Activated naive CD4-positive, alpha-beta T cell treated with anti-CD3 and anti-CD28 coated beads for 36 hours (primary cell): ENCODE measurements at regions of chr1 and their contacts with region 1.

Region 1: DNA sequence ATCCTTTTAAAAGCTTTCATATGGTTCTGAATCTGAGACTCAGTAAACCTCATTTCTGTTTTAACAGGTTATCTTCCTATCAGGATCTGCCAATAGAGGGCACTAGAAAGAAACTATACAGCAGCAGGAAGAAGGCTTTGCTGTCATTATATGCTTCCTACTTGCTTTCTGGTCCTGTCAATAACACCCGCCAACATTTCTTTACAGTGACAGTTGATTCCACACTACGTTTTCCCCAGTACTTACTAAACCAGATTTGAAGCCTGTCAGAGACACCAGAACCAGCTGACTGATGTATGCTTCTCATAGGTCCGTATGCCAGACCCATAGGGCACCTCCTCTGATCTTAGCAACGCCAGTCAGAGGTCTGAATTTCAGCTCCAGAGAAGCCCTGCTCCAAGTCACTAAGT is 341.0 kb upstream of the NEGR1 start:
- DNase-seq: no peak
- H3K4me3 Mint-ChIP-seq: no peak overlapping the region
- H3K27ac Mint-ChIP-seq: no peak overlapping the region
- H3K4me1 Mint-ChIP-seq: no peaks in the 10 kb centered on the region
- H3K27me3 Mint-ChIP-seq: no peaks in the 10 kb centered on the region

Region 2: DNA sequence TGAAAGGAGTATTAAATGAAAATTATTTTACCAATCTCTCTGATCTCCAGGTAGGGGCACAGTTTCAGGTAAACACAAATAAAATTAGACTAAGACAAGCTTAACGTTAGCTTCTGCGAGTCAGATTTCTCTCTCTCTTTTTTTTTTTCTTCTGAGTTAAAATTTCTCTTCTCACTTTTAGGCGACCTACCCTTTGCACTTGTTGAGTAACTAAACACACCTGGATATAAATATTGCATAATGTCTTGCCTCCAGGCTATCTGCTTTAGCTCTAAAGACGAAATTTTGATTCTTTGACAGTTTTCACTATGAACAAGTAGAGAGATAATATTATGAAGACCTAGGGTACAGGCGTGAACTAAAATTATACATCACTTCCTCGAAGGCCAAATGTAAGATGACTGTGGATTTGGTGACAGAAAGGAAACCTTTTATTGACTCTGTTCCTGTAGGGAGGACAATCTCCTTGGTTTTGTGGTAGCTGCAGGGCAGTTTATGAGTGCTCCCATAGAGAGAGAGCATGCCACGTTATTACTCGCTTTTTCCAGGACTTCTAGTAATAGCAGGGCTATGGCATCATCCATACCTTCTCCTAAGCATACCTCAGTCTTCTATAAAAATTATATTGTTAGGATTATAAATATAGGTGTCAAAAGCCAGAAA is 37.1 kb before region 1 on chr1:
- CTCF ChIA-PET with region 1: no interaction called
- intact Hi-C with region 1: no loop called
- DNase-seq: no peak
- H3K4me3 Mint-ChIP-seq: no peak overlapping the region
- H3K27ac Mint-ChIP-seq: no peak overlapping the region
- H3K4me1 Mint-ChIP-seq: no peaks in the 10 kb centered on the region
- H3K27me3 Mint-ChIP-seq: no peaks in the 10 kb centered on the region

Region 3: GRCh38 chr1:73674945-73675561 is 1051.7 kb after region 1 on chr1:
- CTCF ChIA-PET with region 1: no interaction called
- intact Hi-C with region 1: loop called (anchors 5 kb)
- DNase-seq: no peak
- H3K4me3 Mint-ChIP-seq: no peak overlapping the region
- H3K27ac Mint-ChIP-seq: no peak overlapping the region
- H3K4me1 Mint-ChIP-seq: no peaks in the 10 kb centered on the region
- H3K27me3 Mint-ChIP-seq: no peaks in the 10 kb centered on the region

Region 4: GRCh38 chr1:73998348-73998959 is 1375.2 kb after region 1 on chr1:
- CTCF ChIA-PET with region 1: no interaction called
- intact Hi-C with region 1: loop called (anchors 1 kb)
- DNase-seq: no peak
- H3K4me3 Mint-ChIP-seq: no peak overlapping the region
- H3K27ac Mint-ChIP-seq: no peak overlapping the region
- H3K4me1 Mint-ChIP-seq: no peaks in the 10 kb centered on the region
- H3K27me3 Mint-ChIP-seq: no peaks in the 10 kb centered on the region